AG04449 (cell line): ENCODE measurements at regions of chr5 and their contacts with region 1.

Region 1: DNA sequence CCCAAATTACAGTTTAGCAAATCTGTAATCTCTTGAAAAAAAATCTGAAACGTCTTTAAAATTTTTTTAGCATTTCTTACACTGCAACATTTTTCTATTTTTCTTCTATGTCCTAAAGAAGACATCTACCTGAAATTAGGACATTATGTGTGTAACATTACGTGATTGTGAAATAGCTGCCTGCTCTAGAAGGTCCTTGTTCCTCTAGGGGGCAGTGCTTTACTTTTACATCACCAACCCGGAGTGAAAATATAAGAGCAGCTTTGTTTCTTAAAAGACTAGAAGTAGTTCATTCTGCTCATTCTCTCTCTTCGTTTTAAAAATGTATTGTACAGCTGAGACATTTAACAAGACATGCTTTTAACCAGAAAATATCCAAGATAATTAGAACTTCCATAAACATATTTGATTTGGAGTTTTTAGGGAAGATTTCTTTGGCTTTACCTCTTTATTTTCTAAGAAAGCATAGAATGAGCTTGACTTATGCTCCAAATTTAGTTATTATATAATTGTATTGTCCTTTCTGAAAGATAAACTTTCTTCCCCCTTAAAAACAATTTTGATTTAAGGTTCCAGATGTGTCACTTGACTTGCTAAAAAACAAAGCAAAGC is 48.1 kb upstream of the RIOK2 start:
- DNase-seq: peak; percentile 44
- H3K4me3 ChIP-seq: no peak overlapping the region
- CTCF ChIP-seq: peak; percentile 74

Region 2: DNA sequence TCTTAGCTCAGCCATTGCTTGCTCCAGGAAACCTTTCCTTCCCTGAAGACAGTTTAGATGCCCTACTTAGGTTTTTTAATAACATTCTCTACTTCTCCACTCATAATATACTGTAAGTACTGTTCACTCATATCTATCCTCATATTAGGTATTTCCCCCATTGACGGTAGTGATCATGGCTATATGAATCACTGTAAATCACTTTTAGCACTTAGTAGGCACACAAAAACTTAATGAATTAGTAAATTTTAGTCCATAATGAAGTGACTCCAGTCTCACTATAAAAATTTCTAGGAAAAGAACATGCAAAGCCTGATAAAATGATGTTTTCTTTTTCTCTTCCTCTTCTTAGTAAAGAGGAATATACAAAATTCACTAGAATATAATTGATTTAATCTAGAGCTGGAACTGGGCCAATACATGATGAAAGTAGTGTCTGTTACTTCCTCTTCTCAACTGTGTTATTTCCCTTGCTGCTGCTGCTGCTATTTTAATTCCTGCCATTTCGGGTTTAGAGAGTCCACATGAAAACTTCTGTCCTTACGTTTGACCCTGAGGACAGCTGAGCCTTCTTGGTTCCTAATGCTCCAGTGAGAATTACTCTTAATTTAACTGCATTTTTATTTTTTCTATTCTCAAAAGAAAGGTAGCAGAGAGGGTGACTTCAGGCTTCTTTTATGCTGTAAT is 221.8 kb before region 1 on chr5:
- CTCF ChIA-PET with region 1: no interaction called
- POLR2A ChIA-PET with region 1: no interaction called
- DNase-seq: no peak
- H3K4me3 ChIP-seq: no peak overlapping the region
- CTCF ChIP-seq: no peak

Region 3: DNA sequence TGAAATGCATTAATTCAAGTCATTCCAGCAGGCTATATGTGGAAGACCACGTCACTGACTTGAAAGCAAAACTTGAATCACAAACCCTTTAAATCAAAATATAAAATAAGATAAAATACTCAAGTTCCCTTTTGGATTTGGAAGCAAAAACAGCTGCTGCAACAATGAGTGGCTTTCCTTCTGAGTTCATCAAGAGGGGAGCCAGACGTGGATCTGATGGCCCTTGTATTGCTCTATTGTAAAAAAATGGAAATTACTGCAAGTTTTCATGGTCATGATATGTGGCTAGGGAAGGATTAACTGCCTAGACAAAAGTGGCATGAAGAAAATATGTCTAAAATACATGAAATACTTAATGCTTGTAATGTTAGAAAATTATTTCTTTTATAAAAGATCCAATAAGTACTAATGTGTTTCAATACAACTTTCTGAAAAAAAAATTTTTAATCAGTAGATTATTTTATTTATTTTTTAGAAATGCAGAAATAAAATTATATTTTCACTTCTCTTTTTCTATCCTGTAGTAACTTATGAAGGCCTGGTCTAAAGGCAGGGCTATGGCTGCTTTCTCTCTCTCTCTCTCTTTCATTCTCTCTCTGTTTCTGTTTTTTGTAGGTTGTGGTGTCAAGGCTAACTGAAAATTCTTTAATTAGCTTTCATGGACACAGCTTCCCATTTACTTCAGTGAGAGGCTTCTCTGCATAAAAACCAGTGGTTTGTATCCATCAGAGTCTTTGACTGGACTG is 112.7 kb before region 1 on chr5:
- CTCF ChIA-PET with region 1: no interaction called
- POLR2A ChIA-PET with region 1: no interaction called
- DNase-seq: no peak
- H3K4me3 ChIP-seq: no peak overlapping the region
- CTCF ChIP-seq: no peak

Region 4: GRCh38 chr5:97208714-97209113 is 22.4 kb before region 1 on chr5:
- CTCF ChIA-PET with region 1: interaction called, 23 read pairs
- POLR2A ChIA-PET with region 1: no interaction called
- DNase-seq: no peak
- H3K4me3 ChIP-seq: no peak overlapping the region
- CTCF ChIP-seq: no peak

Region 5: GRCh38 chr5:97243353-97243752 is 12.2 kb after region 1 on chr5:
- CTCF ChIA-PET with region 1: interaction called, 36 read pairs
- POLR2A ChIA-PET with region 1: no interaction called
- DNase-seq: no peak
- H3K4me3 ChIP-seq: no peak overlapping the region
- CTCF ChIP-seq: no peak

Region 6: GRCh38 chr5:97297063-97297703 is 66.1 kb after region 1 on chr5:
- CTCF ChIA-PET with region 1: no interaction called
- POLR2A ChIA-PET with region 1: no interaction called
- DNase-seq: no peak
- H3K4me3 ChIP-seq: no peak overlapping the region
- CTCF ChIP-seq: peak; percentile 18